Dorsolateral prefrontal cortex (tissue), 120 donors: ENCODE measurements at regions of chr9 and their contacts with region 1.

Region 1: GRCh38 chr9:5186416-5187169 is 1.2 kb upstream of the INSL6 start:
- DNase-seq: peak in 7 of 10 donors; percentile 10 to 70 (median 50)
- H3K4me3 ChIP-seq: no peak overlapping the region
- H3K27ac ChIP-seq: no peak overlapping the region
- H3K27me3 ChIP-seq: peaks cover 0 to 8% (median 0%) of the 10 kb centered on the region in 45 donors
- CTCF ChIP-seq: peak in 55 of 56 donors; percentile 30 to 82 (median 66)

Region 2: DNA sequence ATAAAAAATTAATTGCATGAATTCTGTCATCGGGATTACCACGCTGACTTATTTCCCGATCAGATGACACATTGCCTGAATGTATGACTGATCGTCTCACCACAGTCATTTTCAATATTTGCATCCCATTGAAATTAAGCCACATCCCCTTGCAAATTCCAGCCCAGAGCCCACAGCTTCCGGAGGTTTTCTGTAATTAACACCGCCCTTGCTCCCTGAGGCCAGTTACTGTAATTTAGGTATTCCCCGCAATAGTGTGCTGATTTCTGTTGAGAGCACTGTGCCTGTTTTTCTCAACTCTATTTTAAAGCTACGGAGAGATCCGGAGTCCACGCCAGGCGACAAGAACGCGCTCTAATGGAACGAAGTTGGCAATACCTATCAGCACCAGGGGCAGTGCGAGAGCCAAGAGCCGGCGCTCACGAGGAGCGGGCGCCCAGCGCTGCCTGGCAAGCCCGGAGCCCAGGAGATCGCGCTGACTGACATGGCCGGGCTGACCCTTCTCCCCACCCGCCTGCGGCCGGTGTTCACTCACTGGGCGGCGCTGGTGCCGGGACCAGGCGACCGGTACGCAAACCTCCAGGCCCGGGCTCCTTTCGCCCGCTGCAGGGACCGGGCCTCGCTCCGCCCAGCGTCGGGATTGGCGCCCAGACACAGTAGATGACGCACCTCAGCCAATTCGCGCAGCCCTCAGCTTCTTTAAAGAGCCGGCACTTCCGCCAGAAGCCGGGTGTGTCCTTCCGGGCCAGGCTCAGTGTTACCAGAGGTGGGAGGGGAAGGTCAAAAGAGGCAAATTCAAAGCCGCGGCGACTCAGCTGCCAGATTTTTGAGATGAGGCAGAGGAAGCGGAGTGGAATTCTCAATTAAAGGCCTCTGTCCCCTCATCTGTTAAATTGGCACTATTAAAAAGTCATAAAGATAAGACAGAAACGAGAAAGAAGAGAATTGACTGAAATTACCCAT is 250.9 kb after region 1 on chr9 and contains the start of gene PLGRKT:
- intact Hi-C with region 1: loop called (anchors 5 kb)
- DNase-seq: peak; percentile 93 to 99 (median 97)
- H3K4me3 ChIP-seq: peak within 1 kb of the TSS; percentile 58 to 98 (median 83)
- H3K27ac ChIP-seq: peak within 1 kb of the TSS; percentile 73 to 99 (median 93)
- H3K27me3 ChIP-seq: no peaks in the 10 kb centered on the region
- CTCF ChIP-seq: peak in 51 of 56 donors; percentile 6 to 66 (median 46)
- total RNA-seq, gene PLGRKT: 4.1 to 17.5 (median 10.1) TPM

Region 3: GRCh38 chr9:5593904-5594303 is 407.3 kb after region 1 on chr9:
- intact Hi-C with region 1: loop called in 1 of 2 experiments (anchors 5 kb)
- DNase-seq: no peak
- H3K4me3 ChIP-seq: no peak overlapping the region
- H3K27ac ChIP-seq: no peak overlapping the region
- H3K27me3 ChIP-seq: no peaks in the 10 kb centered on the region
- CTCF ChIP-seq: no peak